ENCODE measurements at regions of chr12 and their contacts with region 1.

Region 1: GRCh38 chr12:49088190-49088931 is 6.2 kb downstream of the DHH start:
- DNase-seq: peak; percentile 51 to 77
- ATAC-seq: peak; percentile 94 to 97
- H3K4me3 ChIP-seq: peak overlapping the region in 2 of 4 donors; percentile 20 to 40
- H3K27ac ChIP-seq: no peak overlapping the region
- H3K4me1 ChIP-seq: peaks cover 8 to 22% of the 10 kb centered on the region in 2 donors
- H3K27me3 ChIP-seq: peaks cover 42 to 45% (median 45%) of the 10 kb centered on the region in 3 donors
- CTCF ChIP-seq: peak; percentile 72 to 92 (median 87)
- POLR2A ChIP-seq: no peak

Region 2: GRCh38 chr12:48957141-48958048 is 131.0 kb before region 1 on chr12 and contains the start of gene ARF3:
- in situ Hi-C with region 1: no loop called
- intact Hi-C with region 1: no loop called
- DNase-seq: peak; percentile 82 to 83
- ATAC-seq: peak; percentile 89 to 92
- H3K4me3 ChIP-seq: peak within 1 kb of the TSS; percentile 86 to 100 (median 88)
- H3K27ac ChIP-seq: peak within 1 kb of the TSS; percentile 58 to 81 (median 74)
- H3K4me1 ChIP-seq: peaks cover 15 to 16% of the 10 kb centered on the region in 2 donors
- H3K27me3 ChIP-seq: peaks cover 0 to 4% (median 0%) of the 10 kb centered on the region in 3 donors
- CTCF ChIP-seq: no peak
- POLR2A ChIP-seq: peak; percentile 41 to 43
- total RNA-seq, gene ARF3: 4.9 to 17.2 (median 13.5) TPM

Region 3: GRCh38 chr12:49121047-49121696 is 32.8 kb after region 1 on chr12:
- in situ Hi-C with region 1: loop called in 2 of 4 experiments (anchors 5 kb)
- intact Hi-C with region 1: loop called (anchors 1 kb)
- DNase-seq: peak; percentile 31 to 45
- ATAC-seq: peak; percentile 88 to 94
- H3K4me3 ChIP-seq: no peak overlapping the region
- H3K27ac ChIP-seq: no peak overlapping the region
- H3K4me1 ChIP-seq: no peaks in the 10 kb centered on the region
- H3K27me3 ChIP-seq: no peaks in the 10 kb centered on the region
- CTCF ChIP-seq: peak; percentile 44 to 67 (median 62)
- POLR2A ChIP-seq: no peak